CD8-positive, alpha-beta T cell (primary cell): ENCODE measurements at regions of chr9 and their contacts with region 1.

Region 1: GRCh38 chr9:92764988-92765936 is 629 bp upstream of the BICD2 start:
- DNase-seq: peak; percentile 96 to 99 (median 97)
- ATAC-seq: peak; percentile 89
- H3K4me3 ChIP-seq: peak overlapping the region; percentile 68 to 94
- H3K4me3 Mint-ChIP-seq: peak overlapping the region; percentile 91
- H3K27ac ChIP-seq: peak overlapping the region; percentile 98 to 99
- H3K27ac Mint-ChIP-seq: peak overlapping the region; percentile 98
- H3K4me1 ChIP-seq: peaks cover 37% of the 10 kb centered on the region
- H3K4me1 Mint-ChIP-seq: peaks cover 55% of the 10 kb centered on the region
- H3K27me3 ChIP-seq: no peaks in the 10 kb centered on the region
- H3K27me3 Mint-ChIP-seq: no peaks in the 10 kb centered on the region
- CTCF ChIP-seq: peak; percentile 91

Region 2: DNA sequence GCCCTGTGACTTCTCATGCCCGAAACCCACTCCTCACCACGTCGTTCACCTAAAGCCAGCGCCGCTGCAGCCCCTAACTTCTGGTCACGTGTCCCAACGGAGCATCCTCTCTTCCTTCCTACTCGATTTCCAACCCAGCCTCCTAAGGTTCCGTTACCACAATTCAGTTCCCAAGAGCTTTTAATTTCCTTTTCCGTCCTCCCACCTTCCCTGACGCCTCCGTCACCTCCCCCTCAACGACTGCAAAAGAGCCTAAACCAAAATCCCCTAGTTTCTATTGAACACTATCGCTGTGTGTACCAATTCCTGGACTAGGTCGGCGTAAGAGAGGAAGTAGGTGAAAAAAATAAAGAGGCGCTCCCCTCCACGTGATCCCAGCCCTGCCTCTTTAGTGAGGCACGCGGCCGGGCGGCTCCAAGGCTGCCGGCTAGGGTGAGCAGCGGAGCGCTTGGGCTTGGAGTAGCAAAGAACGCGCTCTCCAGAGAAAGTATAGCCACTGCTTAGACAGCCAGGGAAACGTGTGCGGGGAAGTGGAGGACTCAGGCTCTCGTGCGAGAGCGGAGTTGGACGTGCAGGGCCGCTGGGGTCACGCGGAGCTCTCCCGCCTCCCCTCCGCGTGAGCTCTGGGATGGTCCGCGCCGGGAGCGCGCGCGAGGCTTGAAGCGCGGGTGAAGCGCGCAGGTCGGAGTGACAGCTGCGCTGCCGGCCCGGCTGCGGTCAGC is 439.8 kb before region 1 on chr9 and contains the starts of genes CENPP and NOL8:
- CTCF ChIA-PET with region 1: no interaction called
- POLR2A ChIA-PET with region 1: no interaction called
- intact Hi-C with region 1: loop called (anchors 1 kb)
- DNase-seq: peak; percentile 70 to 93 (median 83)
- ATAC-seq: peak; percentile 92
- H3K4me3 ChIP-seq: peak within 1 kb of the TSS; percentile 81 to 84
- H3K4me3 Mint-ChIP-seq: peak within 1 kb of the TSS; percentile 99
- H3K27ac ChIP-seq: peak within 1 kb of the TSS; percentile 82 to 97
- H3K27ac Mint-ChIP-seq: peak within 1 kb of the TSS; percentile 99
- H3K4me1 ChIP-seq: peaks cover 18% of the 10 kb centered on the region
- H3K4me1 Mint-ChIP-seq: peaks cover 38% of the 10 kb centered on the region
- H3K27me3 ChIP-seq: no peaks in the 10 kb centered on the region
- H3K27me3 Mint-ChIP-seq: no peaks in the 10 kb centered on the region
- CTCF ChIP-seq: no peak
- total RNA-seq, gene CENPP: 2.8 to 4.6 TPM
- total RNA-seq, gene NOL8: 63.2 to 69.0 TPM

Region 3: DNA sequence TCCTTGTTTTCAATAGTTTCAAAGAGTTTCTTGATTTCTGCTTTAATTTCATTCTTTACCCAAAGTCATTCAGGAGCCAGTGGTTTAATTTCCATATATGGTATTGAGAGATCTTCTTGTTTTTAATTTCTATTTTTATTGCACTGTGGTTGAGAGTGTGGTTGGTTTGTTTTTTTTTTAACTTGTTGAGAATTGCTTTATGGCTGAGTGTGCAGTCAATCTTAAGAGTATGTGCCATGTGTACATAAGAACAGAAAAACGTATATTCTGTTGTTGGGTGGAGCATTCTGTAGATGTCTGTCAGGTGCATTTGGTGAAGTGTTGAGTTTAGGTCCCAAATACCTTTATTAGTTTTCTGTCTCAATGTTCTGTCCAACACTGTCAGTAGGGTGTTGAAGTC is 68.6 kb before region 1 on chr9:
- CTCF ChIA-PET with region 1: no interaction called
- POLR2A ChIA-PET with region 1: no interaction called
- intact Hi-C with region 1: no loop called
- DNase-seq: no peak
- ATAC-seq: no peak
- H3K4me3 ChIP-seq: no peak overlapping the region
- H3K4me3 Mint-ChIP-seq: no peak overlapping the region
- H3K27ac ChIP-seq: no peak overlapping the region
- H3K27ac Mint-ChIP-seq: peak overlapping the region; percentile 8
- H3K4me1 ChIP-seq: no peaks in the 10 kb centered on the region
- H3K4me1 Mint-ChIP-seq: peaks cover 8% of the 10 kb centered on the region
- H3K27me3 ChIP-seq: no peaks in the 10 kb centered on the region
- H3K27me3 Mint-ChIP-seq: peaks cover 4% of the 10 kb centered on the region
- CTCF ChIP-seq: no peak

Region 4: DNA sequence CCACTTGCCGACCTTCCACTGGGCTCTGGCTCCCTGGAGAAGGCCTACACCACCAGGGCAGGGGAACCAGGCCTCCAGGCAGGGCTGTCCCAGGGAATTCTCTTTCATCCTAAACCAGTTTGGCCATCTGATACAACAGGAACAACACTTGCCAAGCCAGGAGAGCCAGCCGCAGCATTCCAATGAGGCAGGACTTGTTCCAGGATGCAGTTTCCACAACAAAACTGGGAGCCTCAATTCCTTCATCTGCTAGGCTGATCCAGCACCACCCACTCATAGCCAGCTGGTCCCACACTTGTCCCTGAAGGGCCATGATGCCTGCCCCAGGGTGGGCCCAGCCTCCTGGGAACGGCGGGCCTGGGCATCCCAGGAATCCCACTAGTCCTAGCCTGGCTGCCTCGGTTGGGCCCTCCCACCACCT is 26.6 kb before region 1 on chr9:
- CTCF ChIA-PET with region 1: no interaction called
- POLR2A ChIA-PET with region 1: no interaction called
- intact Hi-C with region 1: loop called in 1 of 2 experiments (anchors 2 kb)
- DNase-seq: no peak
- ATAC-seq: no peak
- H3K4me3 ChIP-seq: no peak overlapping the region
- H3K4me3 Mint-ChIP-seq: no peak overlapping the region
- H3K27ac ChIP-seq: no peak overlapping the region
- H3K27ac Mint-ChIP-seq: peak overlapping the region; percentile 81
- H3K4me1 ChIP-seq: peaks cover 43% of the 10 kb centered on the region
- H3K4me1 Mint-ChIP-seq: peaks cover 85% of the 10 kb centered on the region
- H3K27me3 ChIP-seq: no peaks in the 10 kb centered on the region
- H3K27me3 Mint-ChIP-seq: no peaks in the 10 kb centered on the region
- CTCF ChIP-seq: no peak

Region 5: GRCh38 chr9:92877531-92878430 is 112.5 kb after region 1 on chr9 and contains the start of gene ZNF484:
- CTCF ChIA-PET with region 1: no interaction called
- POLR2A ChIA-PET with region 1: no interaction called
- intact Hi-C with region 1: loop called (anchors 1 kb)
- DNase-seq: peak; percentile 91 to 100 (median 98)
- ATAC-seq: peak; percentile 96
- H3K4me3 ChIP-seq: peak within 1 kb of the TSS; percentile 76 to 85
- H3K4me3 Mint-ChIP-seq: peak within 1 kb of the TSS; percentile 100
- H3K27ac ChIP-seq: peak within 1 kb of the TSS; percentile 81 to 90
- H3K27ac Mint-ChIP-seq: peak within 1 kb of the TSS; percentile 100
- H3K4me1 ChIP-seq: peaks cover 19% of the 10 kb centered on the region
- H3K4me1 Mint-ChIP-seq: peaks cover 48% of the 10 kb centered on the region
- H3K27me3 ChIP-seq: no peaks in the 10 kb centered on the region
- H3K27me3 Mint-ChIP-seq: no peaks in the 10 kb centered on the region
- CTCF ChIP-seq: no peak
- total RNA-seq, gene ZNF484: 18.4 to 18.7 TPM

Region 6: GRCh38 chr9:93183609-93184431 is 418.6 kb after region 1 on chr9 and contains the start of gene WNK2:
- CTCF ChIA-PET with region 1: no interaction called
- POLR2A ChIA-PET with region 1: no interaction called
- intact Hi-C with region 1: no loop called
- DNase-seq: peak in 7 of 9 experiments; percentile 10 to 66 (median 42)
- ATAC-seq: peak; percentile 89
- H3K4me3 ChIP-seq: peak within 1 kb of the TSS; percentile 33 to 52
- H3K4me3 Mint-ChIP-seq: peak within 1 kb of the TSS; percentile 76
- H3K27ac ChIP-seq: no peak within 1 kb of the TSS
- H3K27ac Mint-ChIP-seq: no peak within 1 kb of the TSS
- H3K4me1 ChIP-seq: peaks cover 8% of the 10 kb centered on the region
- H3K4me1 Mint-ChIP-seq: peaks cover 8% of the 10 kb centered on the region
- H3K27me3 ChIP-seq: peaks cover 10 to 12% of the 10 kb centered on the region in 2 experiments
- H3K27me3 Mint-ChIP-seq: peaks cover 41% of the 10 kb centered on the region
- CTCF ChIP-seq: no peak
- total RNA-seq, gene WNK2: 0.25 to 0.30 TPM

Region 7: GRCh38 chr9:93453047-93453914 is 688.0 kb after region 1 on chr9 and contains the start of gene FAM120AOS:
- CTCF ChIA-PET with region 1: no interaction called
- POLR2A ChIA-PET with region 1: no interaction called
- intact Hi-C with region 1: loop called in 1 of 2 experiments (anchors 5 kb)
- DNase-seq: peak; percentile 59 to 95 (median 85)
- ATAC-seq: peak; percentile 74
- H3K4me3 ChIP-seq: peak within 1 kb of the TSS; percentile 63 to 88
- H3K4me3 Mint-ChIP-seq: peak within 1 kb of the TSS; percentile 90
- H3K27ac ChIP-seq: peak within 1 kb of the TSS; percentile 49 to 68
- H3K27ac Mint-ChIP-seq: peak within 1 kb of the TSS; percentile 95
- H3K4me1 ChIP-seq: peaks cover 27% of the 10 kb centered on the region
- H3K4me1 Mint-ChIP-seq: peaks cover 60% of the 10 kb centered on the region
- H3K27me3 ChIP-seq: no peaks in the 10 kb centered on the region
- H3K27me3 Mint-ChIP-seq: no peaks in the 10 kb centered on the region
- CTCF ChIP-seq: no peak
- total RNA-seq, gene FAM120AOS: 40.3 to 40.7 TPM

Region 8: GRCh38 chr9:94259077-94259892 is 1494.0 kb after region 1 on chr9 and contains the start of gene ZNF169:
- CTCF ChIA-PET with region 1: no interaction called
- POLR2A ChIA-PET with region 1: no interaction called
- intact Hi-C with region 1: loop called in 1 of 2 experiments (anchors 5 kb)
- DNase-seq: peak; percentile 70 to 90 (median 85)
- ATAC-seq: peak; percentile 100
- H3K4me3 ChIP-seq: peak within 1 kb of the TSS; percentile 85 to 98
- H3K4me3 Mint-ChIP-seq: peak within 1 kb of the TSS; percentile 99
- H3K27ac ChIP-seq: peak within 1 kb of the TSS; percentile 54 to 75
- H3K27ac Mint-ChIP-seq: peak within 1 kb of the TSS; percentile 95
- H3K4me1 ChIP-seq: peaks cover 10% of the 10 kb centered on the region
- H3K4me1 Mint-ChIP-seq: peaks cover 38% of the 10 kb centered on the region
- H3K27me3 ChIP-seq: no peaks in the 10 kb centered on the region
- H3K27me3 Mint-ChIP-seq: peaks cover 5% of the 10 kb centered on the region
- CTCF ChIP-seq: no peak
- total RNA-seq, gene ZNF169: 3.3 to 6.4 TPM